ENCODE measurements at regions of chr1 and their contacts with region 1.

Region 1: DNA sequence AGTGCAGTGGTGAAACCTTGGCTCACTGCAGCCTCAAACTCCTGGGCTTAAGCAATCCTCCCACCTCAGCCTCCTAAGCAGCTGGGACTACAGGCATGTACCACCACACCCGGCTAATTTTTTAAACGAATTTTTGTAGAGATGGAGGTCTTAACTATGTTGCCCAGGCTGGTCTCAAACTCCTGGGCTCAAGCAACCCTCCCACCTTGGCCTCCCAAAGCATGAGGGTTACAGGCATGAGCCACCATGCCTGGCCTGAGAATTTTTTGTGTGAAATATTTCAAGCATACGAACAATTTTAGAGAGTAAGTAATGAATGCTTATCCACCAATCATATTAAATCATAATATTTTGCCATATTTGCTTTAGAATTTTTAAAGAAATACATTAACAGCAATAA is 51.6 kb downstream of the MROH9 start:
- DNase-seq: no peak
- ATAC-seq: no peak
- H3K4me3 ChIP-seq: no peak overlapping the region
- H3K27ac ChIP-seq: no peak overlapping the region
- H3K4me1 ChIP-seq: no peaks in the 10 kb centered on the region
- H3K27me3 ChIP-seq: no peaks in the 10 kb centered on the region
- CTCF ChIP-seq: no peak

Region 2: DNA sequence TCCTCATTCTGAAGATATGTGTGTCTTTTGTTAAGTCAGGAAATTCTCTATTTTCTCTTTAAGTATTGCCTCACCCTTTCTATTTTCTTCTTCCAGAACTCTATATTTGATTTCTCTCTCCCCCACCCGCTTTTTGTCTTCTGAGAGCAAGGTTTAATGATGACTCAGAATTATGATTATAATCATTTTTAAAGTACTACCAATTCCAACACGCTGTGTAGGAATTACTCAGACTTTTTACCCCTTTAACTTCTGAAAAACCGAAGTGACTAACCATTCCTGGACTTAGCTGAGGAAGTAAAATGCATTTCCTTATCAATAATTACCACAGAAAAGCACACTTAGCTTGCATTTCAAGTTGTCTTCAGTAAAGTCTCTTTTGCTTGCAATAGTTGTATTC is 1072.4 kb before region 1 on chr1:
- CTCF ChIA-PET with region 1: no interaction called
- POLR2A ChIA-PET with region 1: interaction called, 10 read pairs
- in situ Hi-C with region 1: no loop called
- intact Hi-C with region 1: no loop called
- DNase-seq: no peak
- ATAC-seq: no peak
- H3K4me3 ChIP-seq: no peak overlapping the region
- H3K27ac ChIP-seq: no peak overlapping the region
- H3K4me1 ChIP-seq: no peaks in the 10 kb centered on the region
- H3K27me3 ChIP-seq: no peaks in the 10 kb centered on the region
- CTCF ChIP-seq: no peak

Region 3: GRCh38 chr1:171434717-171435346 is 447.9 kb after region 1 on chr1:
- CTCF ChIA-PET with region 1: no interaction called
- POLR2A ChIA-PET with region 1: no interaction called
- in situ Hi-C with region 1: no loop called
- intact Hi-C with region 1: no loop called
- DNase-seq: no peak
- ATAC-seq: no peak
- H3K4me3 ChIP-seq: no peak overlapping the region
- H3K27ac ChIP-seq: no peak overlapping the region
- H3K4me1 ChIP-seq: no peaks in the 10 kb centered on the region
- H3K27me3 ChIP-seq: no peaks in the 10 kb centered on the region
- CTCF ChIP-seq: no peak

Measured in Panc1 (cell line).